Activated B cell treated with CpG ODN at 0.5 μM for 24 hours (primary cell): ENCODE measurements at regions of chr22 and their contacts with region 1.

Region 1: DNA sequence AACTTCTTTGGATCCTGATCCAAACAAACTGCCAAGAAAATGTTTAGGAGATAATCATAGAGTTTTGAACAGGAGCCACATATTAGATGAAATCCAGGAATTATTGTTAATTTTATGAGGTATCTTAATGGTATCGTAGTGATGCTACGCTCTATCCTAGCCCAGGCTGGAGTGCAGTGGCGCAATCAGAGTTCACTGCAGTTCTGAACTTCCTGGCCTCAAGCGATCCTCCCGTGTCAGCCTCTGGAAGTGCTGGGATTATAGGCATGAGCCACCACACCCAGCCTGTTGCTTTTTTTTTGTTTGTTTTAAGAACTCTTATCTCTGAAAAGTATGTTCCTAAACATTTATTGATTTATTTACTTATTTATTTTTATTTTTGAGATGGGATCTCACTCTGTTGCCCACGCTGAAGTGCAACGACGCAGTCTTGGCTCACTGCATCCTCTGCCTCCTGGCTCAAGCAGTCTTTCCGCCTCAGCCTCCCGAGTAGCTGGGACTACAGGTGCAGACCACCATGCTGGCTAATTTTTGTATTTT is 2.3 kb downstream of the GSTT4 start:
- DNase-seq: no peak
- ATAC-seq: no peak
- H3K4me3 Mint-ChIP-seq: no peak overlapping the region
- H3K27ac Mint-ChIP-seq: no peak overlapping the region
- H3K4me1 Mint-ChIP-seq: no peaks in the 10 kb centered on the region
- H3K27me3 Mint-ChIP-seq: no peaks in the 10 kb centered on the region
- CTCF ChIP-seq: no peak

Region 2: DNA sequence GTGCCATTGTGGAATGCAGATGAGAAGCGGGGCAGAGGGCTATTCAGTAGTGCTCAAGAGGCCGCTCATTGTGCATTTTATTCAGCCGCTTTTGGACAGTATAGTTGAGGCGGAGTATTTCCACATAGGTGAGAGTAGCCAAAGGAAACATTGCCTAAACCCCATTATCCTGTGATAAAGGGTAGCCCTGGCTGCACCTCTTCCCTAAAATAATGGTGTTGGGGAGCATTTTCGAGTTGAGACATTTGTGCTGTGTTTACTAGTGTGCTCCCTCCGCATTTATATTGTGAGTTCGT is 336.5 kb after region 1 on chr22:
- CTCF ChIA-PET with region 1: no interaction called
- POLR2A ChIA-PET with region 1: interaction called, 14 read pairs
- intact Hi-C with region 1: no loop called
- DNase-seq: no peak
- ATAC-seq: no peak
- H3K4me3 Mint-ChIP-seq: no peak overlapping the region
- H3K27ac Mint-ChIP-seq: no peak overlapping the region
- H3K4me1 Mint-ChIP-seq: no peaks in the 10 kb centered on the region
- H3K27me3 Mint-ChIP-seq: no peaks in the 10 kb centered on the region
- CTCF ChIP-seq: no peak